ENCODE measurements at regions of chr13 and their contacts with region 1.

Region 1: DNA sequence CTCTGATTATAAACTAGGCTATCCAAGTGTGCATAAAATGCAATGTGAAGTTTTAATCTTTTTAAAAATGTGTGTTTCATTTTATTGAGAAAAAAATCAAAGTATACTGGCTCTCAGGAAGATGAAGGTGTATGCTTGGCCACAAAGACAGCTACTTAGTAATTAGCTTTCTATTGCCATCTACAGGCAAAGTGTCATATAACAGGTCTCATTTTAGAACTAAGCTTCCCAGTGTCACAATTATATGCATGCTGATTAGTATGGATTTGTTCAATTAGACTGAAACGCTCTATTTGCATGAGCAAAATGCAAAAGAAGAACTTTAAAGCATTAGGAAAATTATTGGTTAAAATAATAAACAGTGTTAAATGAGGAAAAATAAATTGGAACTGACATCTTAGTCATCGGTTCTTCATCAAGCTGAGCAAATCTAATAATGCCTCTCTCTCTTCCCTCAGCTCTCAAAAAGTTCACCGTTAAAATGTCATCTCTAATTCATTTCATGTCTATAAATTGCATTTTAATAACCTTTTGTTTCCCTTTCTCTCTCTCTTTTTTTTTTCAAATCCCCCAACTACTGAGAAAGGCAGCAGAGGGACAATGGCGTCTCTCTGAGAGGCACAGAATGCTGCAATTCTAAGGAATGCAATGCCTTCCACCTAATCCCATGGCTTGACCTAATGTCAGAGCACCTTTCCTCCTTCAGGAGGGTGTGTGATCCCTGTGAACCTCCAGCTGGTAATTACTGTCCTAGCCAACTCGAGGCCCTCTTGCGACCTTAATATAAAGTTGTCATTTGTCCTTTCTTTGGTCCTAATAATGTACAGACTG is 313.1 kb upstream of the MAB21L1 start:
- DNase-seq: no peak
- ATAC-seq: peak; percentile 63

Region 2: GRCh38 chr13:35649162-35649561 is 140.4 kb before region 1 on chr13:
- intact Hi-C with region 1: loop called (anchors 10 kb)
- DNase-seq: no peak
- ATAC-seq: peak; percentile 65

Region 3: GRCh38 chr13:35729926-35730627 is 59.5 kb before region 1 on chr13:
- intact Hi-C with region 1: loop called (anchors 5 kb)
- DNase-seq: peak; percentile 91
- ATAC-seq: peak; percentile 86

Region 4: GRCh38 chr13:36475468-36475867 is 685.9 kb after region 1 on chr13:
- intact Hi-C with region 1: no loop called
- DNase-seq: no peak
- ATAC-seq: no peak

Measured in Right ventricle myocardium superior (tissue), 1 donor.